HepG2 (cell line): ENCODE measurements at regions of chr4 and their contacts with region 1.

Region 1: GRCh38 chr4:54683616-54684346 is 26.0 kb downstream of the KIT start:
- DNase-seq: peak; percentile 13
- ATAC-seq: peak; percentile 73
- H3K4me3 ChIP-seq: no peak overlapping the region
- H3K27ac ChIP-seq: no peak overlapping the region
- H3K4me1 ChIP-seq: no peaks in the 10 kb centered on the region
- H3K27me3 ChIP-seq: no peaks in the 10 kb centered on the region
- CTCF ChIP-seq: peak; percentile 41
- EP300 ChIP-seq: no peak
- POLR2A ChIP-seq: no peak
- RAD21 ChIP-seq: no peak

Region 2: DNA sequence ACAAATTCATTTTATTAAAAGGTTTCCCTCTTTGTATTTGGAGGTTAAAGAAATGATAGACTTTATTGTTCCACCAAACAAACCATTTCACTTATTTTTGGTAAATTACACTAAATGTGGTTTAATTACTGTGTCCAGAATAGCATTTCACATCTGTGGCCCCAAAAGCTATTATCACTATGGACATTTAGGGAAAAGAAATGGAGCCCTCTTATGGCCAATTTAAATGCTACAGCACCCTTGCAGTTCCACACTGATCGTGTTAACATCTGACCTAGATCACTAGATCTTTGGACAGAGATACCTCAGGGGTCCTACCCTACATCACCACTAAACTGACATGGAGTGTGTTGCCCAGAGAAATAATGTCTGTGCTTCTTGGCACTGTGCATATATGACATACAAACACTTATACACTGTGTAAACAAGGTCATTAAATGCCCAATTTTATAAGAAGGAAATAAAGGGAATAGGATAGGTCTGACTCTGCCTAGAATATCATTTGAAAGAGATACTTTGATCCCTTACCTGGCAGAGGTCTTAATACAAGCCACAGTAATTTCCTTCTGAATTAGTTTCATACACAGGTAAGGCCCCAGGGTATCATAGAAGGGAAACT is 277.7 kb after region 1 on chr4:
- CTCF ChIA-PET with region 1: interaction called, 5 read pairs
- POLR2A ChIA-PET with region 1: no interaction called
- in situ Hi-C with region 1: loop called (anchors 10 kb)
- intact Hi-C with region 1: loop called (anchors 1 kb)
- DNase-seq: no peak
- ATAC-seq: peak; percentile 73
- H3K4me3 ChIP-seq: no peak overlapping the region
- H3K27ac ChIP-seq: no peak overlapping the region
- H3K4me1 ChIP-seq: no peaks in the 10 kb centered on the region
- H3K27me3 ChIP-seq: no peaks in the 10 kb centered on the region; a peak in 1 of 5 replicates
- CTCF ChIP-seq: peak; percentile 48
- EP300 ChIP-seq: no peak
- POLR2A ChIP-seq: no peak
- RAD21 ChIP-seq: no peak

Region 3: GRCh38 chr4:54976682-54977081 is 292.9 kb after region 1 on chr4:
- CTCF ChIA-PET with region 1: no interaction called
- POLR2A ChIA-PET with region 1: no interaction called
- in situ Hi-C with region 1: no loop called
- intact Hi-C with region 1: no loop called
- DNase-seq: peak; percentile 8
- ATAC-seq: peak; percentile 94
- H3K4me3 ChIP-seq: no peak overlapping the region
- H3K27ac ChIP-seq: no peak overlapping the region
- H3K4me1 ChIP-seq: no peaks in the 10 kb centered on the region
- H3K27me3 ChIP-seq: no peaks in the 10 kb centered on the region
- CTCF ChIP-seq: no peak
- EP300 ChIP-seq: no peak
- POLR2A ChIP-seq: no peak
- RAD21 ChIP-seq: no peak

Region 4: DNA sequence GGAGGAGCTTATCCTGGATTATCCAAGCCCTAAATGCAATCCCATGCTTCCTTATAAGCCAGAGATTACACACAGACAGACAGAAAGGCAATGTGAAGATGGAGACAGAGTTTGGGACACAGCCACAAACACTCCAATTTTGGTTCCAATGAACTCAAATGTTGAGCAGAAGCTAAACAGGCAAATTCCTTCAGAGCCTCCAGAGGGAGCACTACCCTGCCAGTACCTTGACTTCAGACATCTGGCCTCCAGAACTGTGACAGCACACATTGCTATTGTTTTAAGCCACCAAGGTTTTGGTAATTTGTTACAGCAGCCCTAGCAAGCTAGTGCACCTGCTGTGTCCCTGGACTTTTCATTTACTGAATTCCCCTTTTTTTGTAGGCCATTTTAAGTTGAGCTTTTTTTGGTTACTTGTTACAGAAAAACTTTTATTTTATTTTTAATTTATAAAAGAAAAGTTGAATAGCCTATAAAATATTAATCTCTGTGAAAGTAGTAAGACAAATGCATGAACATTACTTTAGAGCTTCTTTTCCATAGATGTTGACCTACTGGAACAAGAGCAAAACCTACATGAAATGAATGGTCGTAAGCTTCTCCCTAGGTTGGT is 628.8 kb after region 1 on chr4:
- CTCF ChIA-PET with region 1: no interaction called
- POLR2A ChIA-PET with region 1: no interaction called
- in situ Hi-C with region 1: loop called (anchors 25 kb)
- intact Hi-C with region 1: no loop called
- DNase-seq: peak; percentile 33
- ATAC-seq: peak; percentile 91
- H3K4me3 ChIP-seq: no peak overlapping the region
- H3K27ac ChIP-seq: no peak overlapping the region
- H3K4me1 ChIP-seq: no peaks in the 10 kb centered on the region
- H3K27me3 ChIP-seq: peaks cover 0 to 3% of the 10 kb centered on the region in 2 experiments; a peak in 1 of 5 replicates
- CTCF ChIP-seq: peak; percentile 70
- EP300 ChIP-seq: no peak
- POLR2A ChIP-seq: no peak
- RAD21 ChIP-seq: peak; percentile 19; the same call in 1 of the 2 replicates